Heart right ventricle (tissue), 16 donors: ENCODE measurements at regions of chrX and their contacts with region 1.

Region 1: GRCh38 chrX:136767104-136767941 is 13.4 kb downstream of the ARHGEF6 start:
- DNase-seq: peak; percentile 65 to 73
- ATAC-seq: peak; percentile 82 to 93 (median 89)
- H3K4me3 ChIP-seq: peak overlapping the region; percentile 51 to 77 (median 74)
- H3K27ac ChIP-seq: peak overlapping the region; percentile 92 to 97 (median 94)
- H3K4me1 ChIP-seq: peaks cover 0 to 32% (median 17%) of the 10 kb centered on the region in 9 donors
- H3K27me3 ChIP-seq: peaks cover 0 to 7% (median 0%) of the 10 kb centered on the region in 7 donors
- CTCF ChIP-seq: peak in 7 of 9 donors; percentile 8 to 51 (median 29)

Region 2: GRCh38 chrX:136735601-136736000 is 31.7 kb before region 1 on chrX:
- intact Hi-C with region 1: loop called in 1 of 10 experiments (anchors 5 kb)
- DNase-seq: no peak
- ATAC-seq: peak in 5 of 8 donors; percentile 42 to 76 (median 48)
- H3K4me3 ChIP-seq: no peak overlapping the region
- H3K27ac ChIP-seq: peak overlapping the region in 7 of 10 donors; percentile 21 to 67 (median 56)
- H3K4me1 ChIP-seq: peaks cover 0 to 21% (median 16%) of the 10 kb centered on the region in 9 donors
- H3K27me3 ChIP-seq: peaks cover 0 to 13% (median 0%) of the 10 kb centered on the region in 7 donors
- CTCF ChIP-seq: no peak

Region 3: DNA sequence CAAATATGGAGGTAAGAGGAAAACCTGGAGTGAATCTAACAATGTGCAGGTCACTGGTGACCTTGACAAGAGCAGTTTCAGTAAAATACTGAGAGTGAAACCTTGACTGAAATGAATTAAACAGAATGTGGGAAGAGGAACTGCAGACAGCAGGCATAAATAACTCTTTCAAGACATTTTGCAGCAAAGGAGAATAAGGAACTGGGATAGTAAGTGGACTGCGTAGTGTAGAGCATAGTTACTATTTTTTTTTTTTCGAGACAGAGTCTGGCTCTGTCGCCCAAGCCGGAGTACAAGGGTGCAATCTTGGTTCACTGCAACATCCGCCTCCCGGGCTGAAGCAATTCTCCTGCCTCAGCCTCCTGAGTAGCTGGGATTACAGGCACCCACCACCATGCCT is 89.2 kb after region 1 on chrX:
- intact Hi-C with region 1: loop called in 2 of 10 experiments (anchors 10 kb)
- DNase-seq: no peak
- ATAC-seq: peak in 4 of 8 donors; percentile 19 to 58 (median 38)
- H3K4me3 ChIP-seq: no peak overlapping the region
- H3K27ac ChIP-seq: peak overlapping the region in 1 of 10 donors; percentile 34
- H3K4me1 ChIP-seq: peaks cover 0 to 20% (median 3%) of the 10 kb centered on the region in 9 donors
- H3K27me3 ChIP-seq: no peaks in the 10 kb centered on the region
- CTCF ChIP-seq: no peak

Region 4: GRCh38 chrX:136880452-136881013 is 113.2 kb after region 1 on chrX and contains the start of gene RBMX:
- intact Hi-C with region 1: loop called in 4 of 10 experiments (anchors 5 to 10 kb)
- DNase-seq: peak; percentile 79 to 95
- ATAC-seq: peak; percentile 93 to 98 (median 97)
- H3K4me3 ChIP-seq: peak within 1 kb of the TSS; percentile 50 to 92 (median 79)
- H3K27ac ChIP-seq: peak within 1 kb of the TSS; percentile 86 to 97 (median 94)
- H3K4me1 ChIP-seq: peaks cover 0 to 24% (median 7%) of the 10 kb centered on the region in 9 donors
- H3K27me3 ChIP-seq: no peaks in the 10 kb centered on the region
- CTCF ChIP-seq: no peak
- total RNA-seq, gene RBMX: 85.7 to 107 (median 91.0) TPM